Left ventricle myocardium superior (tissue), 1 donor: ENCODE measurements at regions of chr19 and their contacts with region 1.

Region 1: DNA sequence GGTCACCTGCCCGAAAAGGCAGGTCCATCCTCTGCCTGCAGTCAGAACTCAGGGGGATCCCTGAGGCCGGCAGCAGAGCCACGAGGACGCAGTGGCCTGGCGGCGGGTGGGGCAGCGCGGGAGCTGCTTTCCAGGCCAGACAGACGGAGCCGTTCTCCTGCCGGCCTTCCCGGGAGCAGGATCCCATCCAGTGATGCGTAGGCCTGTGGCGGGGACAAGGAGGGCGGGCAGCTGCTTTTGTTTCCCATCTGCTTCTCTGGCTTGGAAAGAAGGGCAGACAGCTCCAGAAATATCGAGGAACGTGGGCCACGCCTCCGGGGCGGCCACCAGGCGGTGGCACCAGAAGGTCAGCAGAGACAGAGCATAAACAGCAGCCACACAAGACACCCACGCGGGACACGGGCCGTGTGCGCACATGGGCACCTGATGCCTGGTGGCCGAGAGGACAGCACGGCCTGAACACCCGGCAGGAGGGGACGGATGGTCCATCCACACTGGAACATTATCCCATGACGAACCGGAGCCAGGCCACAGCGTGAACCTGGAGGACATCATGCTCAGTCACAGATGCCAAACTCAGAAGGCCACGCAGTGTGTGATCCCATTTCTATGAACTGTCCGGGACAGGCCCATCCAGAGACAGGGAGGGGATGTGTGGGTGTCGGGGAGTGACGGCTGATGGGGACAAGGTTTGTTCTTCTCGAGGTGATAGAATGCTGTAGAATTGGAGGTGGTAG is 13.9 kb upstream of the MKNK2 start:
- DNase-seq: peak; percentile 82
- ATAC-seq: peak; percentile 35

Region 2: GRCh38 chr19:2021453-2022140 is 43.4 kb before region 1 on chr19:
- intact Hi-C with region 1: loop called (anchors 5 kb)
- DNase-seq: no peak
- ATAC-seq: no peak